Right ventricle myocardium inferior (tissue), 1 donor: ENCODE measurements at regions of chr14 and their contacts with region 1.

Region 1: GRCh38 chr14:21233457-21234076 is 35.7 kb downstream of the HNRNPC start:
- DNase-seq: no peak
- ATAC-seq: peak; percentile 58

Region 2: GRCh38 chr14:21269252-21270046 is 35.9 kb after region 1 on chr14 and contains the start of gene HNRNPC:
- intact Hi-C with region 1: loop called (anchors 5 kb)
- DNase-seq: peak; percentile 100
- ATAC-seq: peak; percentile 99
- total RNA-seq, gene HNRNPC: 266 TPM

Region 3: DNA sequence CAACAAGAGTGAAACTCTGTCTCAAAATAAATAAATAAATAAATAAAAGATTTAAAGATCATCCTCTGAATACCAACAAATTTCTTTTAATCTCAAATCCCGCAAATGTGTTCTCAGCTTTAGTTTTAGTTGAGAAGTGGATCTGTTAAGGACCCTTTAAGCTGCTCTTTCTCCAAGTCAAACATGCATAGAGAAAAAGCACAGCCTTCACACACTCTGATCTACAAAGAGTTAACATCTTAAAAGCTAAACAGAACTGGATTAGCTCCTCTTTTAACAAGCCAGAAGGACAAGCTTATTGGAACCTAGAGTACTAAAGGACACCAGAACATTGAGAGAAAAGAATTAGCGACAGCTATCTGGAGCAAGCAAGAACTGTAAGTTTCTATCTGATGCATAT is 46.2 kb after region 1 on chr14 and contains the start of gene RPGRIP1:
- intact Hi-C with region 1: no loop called
- DNase-seq: no peak
- ATAC-seq: no peak
- total RNA-seq, gene RPGRIP1: 0.60 TPM